Colonic mucosa (tissue), 4 donors: ENCODE measurements at regions of chr19 and their contacts with region 1.

Region 1: DNA sequence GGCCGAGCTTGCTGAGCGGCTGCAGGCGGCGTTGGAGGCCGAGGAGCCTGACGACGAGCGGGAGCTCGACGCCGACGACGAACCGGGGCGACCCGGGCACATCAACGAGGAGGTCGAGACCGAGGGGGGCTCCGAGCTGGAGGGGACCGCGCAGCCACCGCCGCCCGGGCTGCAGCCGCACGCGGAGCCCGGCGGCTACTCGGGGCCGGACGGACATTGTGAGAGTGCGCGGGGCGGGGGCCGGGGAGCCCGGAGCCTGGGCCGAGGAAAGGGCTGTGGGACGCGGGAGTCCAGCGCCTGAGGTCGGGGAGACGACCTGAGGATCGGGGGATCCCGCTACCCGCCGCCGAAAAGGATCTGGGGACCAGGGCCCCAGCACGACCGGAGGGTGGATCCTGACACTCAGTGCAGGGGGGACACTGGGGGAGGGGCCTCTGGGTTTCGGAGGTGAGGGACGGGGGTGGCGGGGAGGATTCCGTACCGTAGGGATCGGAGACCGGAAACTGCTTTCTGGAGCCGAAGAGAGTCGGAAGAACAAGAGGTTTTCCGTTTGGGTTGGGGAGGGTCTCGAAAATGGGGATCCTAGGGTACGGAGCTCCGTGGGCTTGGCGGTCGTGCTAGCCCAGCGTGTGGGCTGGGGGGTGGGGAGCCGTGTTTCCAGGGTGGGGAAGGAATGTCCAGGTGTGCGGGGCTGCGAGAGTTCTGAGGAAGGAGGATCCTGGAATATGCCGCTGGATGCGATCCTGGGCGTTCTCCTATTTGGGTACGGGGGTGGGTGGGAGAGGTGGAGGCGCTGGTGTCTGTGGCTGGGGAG is 616 bp downstream of the HNRNPUL1 start:
- DNase-seq: peak; percentile 51
- H3K4me3 ChIP-seq: peak overlapping the region; percentile 99
- H3K27ac ChIP-seq: peak overlapping the region; percentile 99
- H3K4me1 ChIP-seq: peaks cover 7% of the 10 kb centered on the region
- H3K27me3 ChIP-seq: no peaks in the 10 kb centered on the region
- CTCF ChIP-seq: no peak

Region 2: GRCh38 chr19:41206926-41207750 is 57.6 kb before region 1 on chr19:
- intact Hi-C with region 1: loop called (anchors 2 kb)
- DNase-seq: peak; percentile 43
- H3K4me3 ChIP-seq: no peak overlapping the region
- H3K27ac ChIP-seq: peak overlapping the region; percentile 13
- H3K4me1 ChIP-seq: no peaks in the 10 kb centered on the region
- H3K27me3 ChIP-seq: no peaks in the 10 kb centered on the region
- CTCF ChIP-seq: no peak

Region 3: GRCh38 chr19:41439441-41440222 is 174.8 kb after region 1 on chr19 and contains the start of gene DMAC2:
- intact Hi-C with region 1: no loop called
- DNase-seq: peak; percentile 99
- H3K4me3 ChIP-seq: peak within 1 kb of the TSS; percentile 65
- H3K27ac ChIP-seq: peak within 1 kb of the TSS; percentile 91
- H3K4me1 ChIP-seq: peaks cover 3% of the 10 kb centered on the region
- H3K27me3 ChIP-seq: no peaks in the 10 kb centered on the region
- CTCF ChIP-seq: peak; percentile 26
- total RNA-seq, gene DMAC2: 48.0 to 61.8 TPM